ENCODE measurements at regions of chr4 and their contacts with region 1.

Region 1: DNA sequence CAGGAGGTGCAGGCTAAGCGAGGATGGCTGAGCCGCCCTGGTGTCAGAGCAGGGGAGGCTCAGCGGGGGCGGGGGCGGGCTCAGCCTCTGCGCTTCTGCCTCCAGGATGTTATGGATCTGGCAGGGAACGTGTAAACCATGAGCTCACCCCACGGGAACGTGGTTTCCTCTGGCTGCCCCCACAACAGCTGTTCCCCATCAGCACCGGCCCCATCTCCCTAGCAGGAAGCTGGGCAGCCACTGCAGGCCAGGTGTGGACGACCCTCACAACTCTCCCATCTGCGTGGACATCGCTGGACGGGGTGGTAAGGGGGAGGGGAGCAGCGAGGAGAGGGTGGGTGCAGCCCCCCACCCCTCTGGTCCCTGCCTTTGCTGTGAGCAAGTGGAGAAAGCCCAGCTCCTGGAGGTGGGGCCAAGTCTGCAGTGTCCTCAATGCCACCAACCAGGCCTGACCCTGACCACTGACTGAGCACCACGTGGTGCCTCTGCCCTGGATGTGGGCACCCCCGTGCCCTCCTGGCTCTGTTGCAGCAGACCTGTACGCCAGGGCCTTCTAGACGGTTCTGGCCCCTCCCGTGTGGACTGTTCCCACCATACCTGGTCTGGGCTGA is 28.1 kb upstream of the SPON2 start:
- DNase-seq: no peak
- H3K4me3 Mint-ChIP-seq: peak overlapping the region; percentile 65
- H3K27ac Mint-ChIP-seq: peak overlapping the region; percentile 98
- H3K4me1 Mint-ChIP-seq: peaks cover 45% of the 10 kb centered on the region
- H3K27me3 Mint-ChIP-seq: no peaks in the 10 kb centered on the region

Region 2: GRCh38 chr4:1187182-1187581 is 13.3 kb before region 1 on chr4:
- intact Hi-C with region 1: loop called (anchors 1 kb)
- DNase-seq: peak; percentile 58
- H3K4me3 Mint-ChIP-seq: no peak overlapping the region
- H3K27ac Mint-ChIP-seq: peak overlapping the region; percentile 21
- H3K4me1 Mint-ChIP-seq: peaks cover 45% of the 10 kb centered on the region
- H3K27me3 Mint-ChIP-seq: no peaks in the 10 kb centered on the region

Region 3: GRCh38 chr4:1216869-1217294 is 16.4 kb after region 1 on chr4:
- intact Hi-C with region 1: loop called (anchors 1 kb)
- DNase-seq: peak; percentile 70
- H3K4me3 Mint-ChIP-seq: peak overlapping the region; percentile 70
- H3K27ac Mint-ChIP-seq: peak overlapping the region; percentile 81
- H3K4me1 Mint-ChIP-seq: peaks cover 24% of the 10 kb centered on the region
- H3K27me3 Mint-ChIP-seq: no peaks in the 10 kb centered on the region

Region 4: DNA sequence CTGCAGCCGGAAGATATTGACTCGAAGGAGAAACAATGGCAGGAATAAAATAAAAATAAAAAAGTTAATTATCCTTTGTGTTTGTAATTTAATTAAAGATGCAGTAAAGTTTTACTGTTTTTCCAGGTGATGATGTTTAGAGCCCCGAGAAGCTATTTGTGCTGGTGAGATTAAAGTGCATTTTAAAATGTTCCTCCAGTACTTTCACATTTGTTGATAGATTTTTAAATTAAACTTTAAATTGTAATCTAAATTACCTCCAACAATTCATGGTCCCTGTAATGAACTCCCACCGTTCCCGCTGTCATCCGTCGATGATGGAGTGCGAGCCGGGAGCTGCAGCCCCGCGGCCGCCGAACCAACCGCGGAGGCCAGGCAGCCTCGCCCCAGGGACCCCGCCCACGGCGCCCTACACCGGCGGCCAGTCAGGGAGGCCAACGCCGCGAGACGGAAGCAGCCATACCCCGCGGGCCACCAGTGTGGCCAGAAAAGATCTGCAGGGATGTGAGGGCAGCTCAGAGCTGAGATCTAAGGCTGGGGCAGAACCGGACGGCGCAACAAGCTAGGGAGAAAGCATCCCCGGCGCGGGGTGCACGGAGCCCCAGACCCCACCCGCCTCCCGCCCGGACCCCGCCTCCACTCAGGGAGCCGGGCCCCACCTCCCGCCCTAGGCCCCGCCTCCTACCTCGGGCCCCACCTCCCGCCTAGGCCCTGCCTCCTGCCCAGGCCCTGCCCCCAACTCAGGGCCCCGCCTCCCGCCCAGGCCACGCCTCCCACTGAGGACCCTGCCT is 379.6 kb after region 1 on chr4:
- intact Hi-C with region 1: no loop called
- DNase-seq: peak; percentile 82
- H3K4me3 Mint-ChIP-seq: peak overlapping the region; percentile 67
- H3K27ac Mint-ChIP-seq: peak overlapping the region; percentile 68
- H3K4me1 Mint-ChIP-seq: peaks cover 2% of the 10 kb centered on the region
- H3K27me3 Mint-ChIP-seq: no peaks in the 10 kb centered on the region

Measured in activated T-helper 2 cell treated with anti-CD3 and anti-CD28 coated beads, Interferon-gamma antibody, Interleukin-2, Interleukin-4, amounts not matched to agents 10 μg/mL and 5 μg/mL and 100 μg/mL, durations not matched to agents 14 hours and 24 hours and 36 hours (primary cell).